ENCODE measurements at regions of chr18 and their contacts with region 1.

Region 1: GRCh38 chr18:10660179-10660884 is 134.5 kb downstream of the NAPG start:
- DNase-seq: peak; percentile 27
- H3K4me3 Mint-ChIP-seq: peak overlapping the region; percentile 61
- H3K27ac Mint-ChIP-seq: peak overlapping the region; percentile 86
- H3K4me1 Mint-ChIP-seq: peaks cover 33% of the 10 kb centered on the region
- H3K27me3 Mint-ChIP-seq: no peaks in the 10 kb centered on the region
- CTCF ChIP-seq: no peak

Region 2: DNA sequence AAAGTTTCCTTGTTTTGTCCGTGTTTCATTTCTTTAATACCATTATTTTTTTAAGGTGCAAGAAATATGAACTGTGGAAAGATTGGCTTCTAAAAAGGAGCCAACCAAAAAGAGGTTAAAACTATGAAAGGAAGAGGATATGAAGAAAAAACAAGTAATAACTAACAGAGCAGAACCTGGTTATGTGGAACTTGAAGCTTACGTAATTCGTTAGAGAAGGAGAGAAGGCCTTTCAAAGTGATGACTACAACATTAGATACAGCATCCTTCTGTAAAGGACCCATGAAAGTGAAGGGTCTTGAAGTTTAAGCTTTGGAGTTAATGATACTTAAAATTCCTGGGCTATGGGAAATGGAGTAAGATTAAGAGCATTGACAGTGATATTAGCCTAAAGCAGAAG is 1439.3 kb before region 1 on chr18:
- CTCF ChIA-PET with region 1: no interaction called
- POLR2A ChIA-PET with region 1: no interaction called
- intact Hi-C with region 1: no loop called
- DNase-seq: no peak
- H3K4me3 Mint-ChIP-seq: no peak overlapping the region
- H3K27ac Mint-ChIP-seq: no peak overlapping the region
- H3K4me1 Mint-ChIP-seq: no peaks in the 10 kb centered on the region
- H3K27me3 Mint-ChIP-seq: no peaks in the 10 kb centered on the region
- CTCF ChIP-seq: no peak

Region 3: GRCh38 chr18:11149441-11150270 is 489.3 kb after region 1 on chr18 and contains the start of gene PIEZO2:
- CTCF ChIA-PET with region 1: no interaction called
- POLR2A ChIA-PET with region 1: no interaction called
- intact Hi-C with region 1: loop called (anchors 10 kb)
- DNase-seq: no peak
- H3K4me3 Mint-ChIP-seq: no peak within 1 kb of the TSS
- H3K27ac Mint-ChIP-seq: no peak within 1 kb of the TSS
- H3K4me1 Mint-ChIP-seq: no peaks in the 10 kb centered on the region
- H3K27me3 Mint-ChIP-seq: peaks cover 54% of the 10 kb centered on the region
- CTCF ChIP-seq: no peak
- total RNA-seq, gene PIEZO2: 0.49 and 0.93 TPM in 2 replicates